Activated CD4-positive, alpha-beta memory T cell treated with anti-CD3 and anti-CD28 coated beads for 36 hours (primary cell): ENCODE measurements at regions of chr4 and their contacts with region 1.

Region 1: DNA sequence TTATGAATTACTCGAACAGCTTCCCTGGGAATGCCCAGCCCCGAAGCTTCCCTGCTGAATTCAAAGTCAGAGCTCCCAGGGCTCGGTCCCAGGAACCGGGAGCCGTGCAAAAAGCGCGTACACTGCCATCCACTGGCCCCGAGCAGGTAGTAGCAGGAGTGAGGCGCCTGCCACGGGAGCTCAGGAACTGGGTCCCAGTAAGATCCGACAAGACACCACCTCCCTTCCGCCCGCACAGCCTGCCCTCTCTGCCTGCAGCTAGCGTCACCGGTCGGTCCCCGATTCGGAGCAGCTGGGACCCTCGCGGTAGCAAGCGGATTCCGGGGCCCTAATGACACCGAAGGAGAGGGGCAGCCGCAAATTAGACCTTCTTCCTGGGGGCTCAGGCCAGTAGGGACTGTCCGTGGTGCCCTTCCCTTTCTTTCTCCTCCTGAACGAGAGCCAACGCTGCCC is 1.2 kb downstream of the CORIN start:
- DNase-seq: peak; percentile 74
- H3K4me3 Mint-ChIP-seq: peak overlapping the region; percentile 76
- H3K27ac Mint-ChIP-seq: no peak overlapping the region
- H3K4me1 Mint-ChIP-seq: peaks cover 32% of the 10 kb centered on the region
- H3K27me3 Mint-ChIP-seq: peaks cover 3% of the 10 kb centered on the region

Region 2: GRCh38 chr4:47463235-47463956 is 373.3 kb before region 1 on chr4 and contains the start of gene COMMD8:
- CTCF ChIA-PET with region 1: interaction called, 3 read pairs
- POLR2A ChIA-PET with region 1: no interaction called
- intact Hi-C with region 1: loop called (anchors 2 kb)
- DNase-seq: peak; percentile 98
- H3K4me3 Mint-ChIP-seq: peak within 1 kb of the TSS; percentile 85
- H3K27ac Mint-ChIP-seq: peak within 1 kb of the TSS; percentile 68
- H3K4me1 Mint-ChIP-seq: peaks cover 26% of the 10 kb centered on the region
- H3K27me3 Mint-ChIP-seq: no peaks in the 10 kb centered on the region
- total RNA-seq, gene COMMD8: 27.5 to 27.9 TPM

Region 3: DNA sequence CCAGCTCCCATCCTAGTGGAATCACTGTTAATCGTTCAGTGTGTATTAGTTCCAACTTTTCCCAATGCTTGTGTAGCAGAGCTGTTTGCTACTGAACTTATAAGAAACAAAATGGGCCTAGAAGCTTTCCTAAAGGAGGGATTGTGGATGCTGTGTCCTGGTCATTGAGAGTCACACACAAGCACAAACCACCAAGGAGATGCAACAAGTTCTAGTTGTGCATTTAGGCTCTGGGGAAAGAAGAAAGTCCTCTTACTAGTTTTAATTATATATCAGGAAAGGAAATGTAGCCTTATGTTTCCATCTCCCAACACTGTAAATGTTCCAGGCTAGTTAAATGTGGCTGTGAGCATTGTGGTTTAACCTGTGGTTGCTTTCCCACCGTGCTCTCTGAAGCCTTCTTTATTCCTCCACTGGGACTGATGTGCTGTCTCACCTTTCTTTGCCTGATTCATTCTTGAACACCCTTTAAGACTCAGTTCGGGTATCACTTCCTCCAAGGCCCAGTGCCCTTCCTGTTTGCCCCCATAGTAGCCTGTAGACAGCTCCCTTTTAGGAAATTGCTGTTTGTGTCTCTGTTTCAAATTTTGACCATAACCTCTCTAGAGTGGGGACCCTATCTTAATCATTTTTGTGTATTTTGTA is 317.3 kb before region 1 on chr4:
- CTCF ChIA-PET with region 1: no interaction called
- POLR2A ChIA-PET with region 1: no interaction called
- intact Hi-C with region 1: no loop called
- DNase-seq: no peak
- H3K4me3 Mint-ChIP-seq: no peak overlapping the region
- H3K27ac Mint-ChIP-seq: no peak overlapping the region
- H3K4me1 Mint-ChIP-seq: peaks cover 4% of the 10 kb centered on the region
- H3K27me3 Mint-ChIP-seq: no peaks in the 10 kb centered on the region

Region 4: GRCh38 chr4:47704693-47705325 is 131.9 kb before region 1 on chr4:
- CTCF ChIA-PET with region 1: interaction called, 22 read pairs
- POLR2A ChIA-PET with region 1: no interaction called
- intact Hi-C with region 1: loop called (anchors 1 kb)
- DNase-seq: peak; percentile 37
- H3K4me3 Mint-ChIP-seq: no peak overlapping the region
- H3K27ac Mint-ChIP-seq: no peak overlapping the region
- H3K4me1 Mint-ChIP-seq: no peaks in the 10 kb centered on the region
- H3K27me3 Mint-ChIP-seq: peaks cover 20% of the 10 kb centered on the region

Region 5: GRCh38 chr4:47873877-47874541 is 37.3 kb after region 1 on chr4:
- CTCF ChIA-PET with region 1: interaction called, 8 read pairs
- POLR2A ChIA-PET with region 1: interaction called, 9 read pairs
- intact Hi-C with region 1: loop called (anchors 1 kb)
- DNase-seq: no peak
- H3K4me3 Mint-ChIP-seq: no peak overlapping the region
- H3K27ac Mint-ChIP-seq: peak overlapping the region; percentile 61
- H3K4me1 Mint-ChIP-seq: peaks cover 20% of the 10 kb centered on the region
- H3K27me3 Mint-ChIP-seq: no peaks in the 10 kb centered on the region

Region 6: GRCh38 chr4:47933840-47934239 is 97.2 kb after region 1 on chr4:
- CTCF ChIA-PET with region 1: interaction called, 8 read pairs
- POLR2A ChIA-PET with region 1: no interaction called
- intact Hi-C with region 1: loop called (anchors 5 kb)
- DNase-seq: no peak
- H3K4me3 Mint-ChIP-seq: no peak overlapping the region
- H3K27ac Mint-ChIP-seq: no peak overlapping the region
- H3K4me1 Mint-ChIP-seq: no peaks in the 10 kb centered on the region
- H3K27me3 Mint-ChIP-seq: no peaks in the 10 kb centered on the region

Region 7: DNA sequence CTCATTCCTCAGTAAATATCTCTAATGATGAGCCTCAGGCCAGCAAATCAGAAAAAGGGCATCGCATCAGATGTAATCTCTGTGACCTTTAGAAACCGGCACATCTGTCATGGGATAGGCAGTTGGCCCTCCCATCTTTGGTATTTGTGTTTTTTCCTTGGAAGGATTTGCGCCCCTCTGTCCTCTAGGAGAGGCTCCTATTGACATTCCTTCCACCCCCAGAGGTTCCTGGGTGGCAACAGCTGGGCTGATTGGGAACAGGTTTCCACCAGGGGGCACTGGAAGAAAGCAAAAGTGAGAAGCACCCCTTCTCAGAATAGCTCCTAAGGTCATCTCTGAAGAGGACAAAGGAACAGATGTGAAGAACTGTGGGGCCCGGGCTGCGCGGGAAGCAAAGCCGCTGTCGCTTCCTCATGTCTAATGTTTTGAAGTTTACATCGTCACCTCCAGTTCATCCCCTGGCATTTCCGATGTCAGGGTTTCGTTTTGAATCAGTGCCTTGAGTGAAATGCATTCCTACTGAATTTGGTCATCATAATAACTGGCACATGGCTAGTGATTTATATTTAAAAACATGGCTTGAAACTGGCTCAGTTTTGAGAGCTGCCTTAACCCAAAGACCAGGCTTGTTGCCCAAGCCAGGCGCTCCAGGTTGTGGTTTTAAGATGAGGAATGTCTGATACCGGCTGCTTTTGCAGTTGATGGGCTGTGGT is 291.2 kb after region 1 on chr4:
- CTCF ChIA-PET with region 1: no interaction called
- POLR2A ChIA-PET with region 1: no interaction called
- intact Hi-C with region 1: loop called (anchors 1 kb)
- DNase-seq: peak; percentile 93
- H3K4me3 Mint-ChIP-seq: peak overlapping the region; percentile 63
- H3K27ac Mint-ChIP-seq: peak overlapping the region; percentile 95
- H3K4me1 Mint-ChIP-seq: peaks cover 89% of the 10 kb centered on the region
- H3K27me3 Mint-ChIP-seq: no peaks in the 10 kb centered on the region